Sigmoid colon (tissue), 7 donors: ENCODE measurements at regions of chr7 and their contacts with region 1.

Region 1: GRCh38 chr7:151304856-151305255 is 36.8 kb upstream of the NUB1 start:
- DNase-seq: no peak
- H3K4me3 ChIP-seq: no peak overlapping the region
- H3K27ac ChIP-seq: no peak overlapping the region
- H3K4me1 ChIP-seq: peaks cover 0 to 11% (median 9%) of the 10 kb centered on the region in 4 donors
- H3K27me3 ChIP-seq: peaks cover 5 to 49% (median 28%) of the 10 kb centered on the region in 3 donors
- CTCF ChIP-seq: no peak
- EP300 ChIP-seq: no peak
- POLR2A ChIP-seq: no peak

Region 2: DNA sequence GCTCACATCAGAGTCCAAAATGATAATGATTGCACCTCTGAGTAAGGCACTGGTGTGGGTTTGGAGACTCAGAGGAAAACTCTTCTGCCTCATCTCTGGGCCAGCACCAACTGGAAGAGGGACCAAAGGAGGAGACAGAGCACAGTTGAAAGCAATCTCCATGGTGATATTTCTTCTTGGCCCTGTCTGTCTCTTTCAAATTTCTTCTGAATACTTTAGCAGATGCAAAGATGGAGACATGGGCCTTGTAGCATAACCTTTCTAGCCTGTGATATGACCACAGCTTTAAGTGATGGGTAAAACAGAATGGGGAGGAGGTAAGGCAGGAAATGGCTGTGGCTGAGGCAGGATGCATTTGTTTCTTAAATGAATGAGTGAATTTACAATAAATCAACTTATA is 802.3 kb before region 1 on chr7:
- intact Hi-C with region 1: no loop called
- DNase-seq: no peak
- H3K4me3 ChIP-seq: no peak overlapping the region
- H3K27ac ChIP-seq: no peak overlapping the region
- H3K4me1 ChIP-seq: no peaks in the 10 kb centered on the region
- H3K27me3 ChIP-seq: no peaks in the 10 kb centered on the region
- CTCF ChIP-seq: no peak
- EP300 ChIP-seq: no peak
- POLR2A ChIP-seq: no peak

Region 3: GRCh38 chr7:151123822-151124464 is 180.9 kb before region 1 on chr7:
- intact Hi-C with region 1: loop called (anchors 2 kb)
- DNase-seq: peak; percentile 91
- H3K4me3 ChIP-seq: no peak overlapping the region
- H3K27ac ChIP-seq: no peak overlapping the region
- H3K4me1 ChIP-seq: peaks cover 0 to 26% (median 15%) of the 10 kb centered on the region in 4 donors
- H3K27me3 ChIP-seq: no peaks in the 10 kb centered on the region
- CTCF ChIP-seq: peak; percentile 93 to 98 (median 96)
- EP300 ChIP-seq: no peak
- POLR2A ChIP-seq: no peak

Region 4: GRCh38 chr7:151172273-151173141 is 132.3 kb before region 1 on chr7:
- intact Hi-C with region 1: loop called (anchors 5 kb)
- DNase-seq: peak; percentile 90
- H3K4me3 ChIP-seq: no peak overlapping the region
- H3K27ac ChIP-seq: no peak overlapping the region
- H3K4me1 ChIP-seq: peaks cover 0 to 13% (median 8%) of the 10 kb centered on the region in 4 donors
- H3K27me3 ChIP-seq: peaks cover 13 to 60% (median 42%) of the 10 kb centered on the region in 3 donors
- CTCF ChIP-seq: peak; percentile 100
- EP300 ChIP-seq: no peak
- POLR2A ChIP-seq: no peak

Region 5: DNA sequence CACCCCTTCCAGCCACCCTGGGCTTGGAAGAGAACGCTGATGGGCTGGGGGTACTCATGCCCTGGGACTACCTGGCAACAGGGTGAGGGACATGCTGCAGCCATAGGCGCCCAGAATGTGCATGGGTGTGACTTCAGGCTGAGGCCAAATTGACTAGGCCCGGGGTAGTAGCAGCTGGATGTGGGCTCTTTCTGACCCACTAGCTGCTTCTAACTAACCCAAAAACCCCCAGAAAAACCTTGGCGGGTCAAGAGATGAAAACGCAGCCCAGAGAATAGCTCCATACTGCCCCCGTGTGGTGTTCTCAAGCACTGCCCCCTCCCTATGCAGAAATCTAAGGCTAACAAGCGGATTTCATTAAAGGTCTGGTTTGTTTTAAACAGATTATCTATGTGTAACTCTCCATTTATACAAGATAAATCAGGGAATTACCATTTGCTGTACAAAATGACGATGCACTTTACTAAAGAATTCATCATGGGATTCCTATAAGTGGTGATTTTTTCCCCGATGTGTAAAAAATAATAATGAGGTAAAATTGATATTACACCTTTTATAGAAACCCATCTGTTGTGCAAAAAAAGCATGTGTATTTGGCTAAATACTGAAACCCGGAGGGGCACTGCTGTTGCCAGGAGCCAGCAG is 60.5 kb before region 1 on chr7:
- intact Hi-C with region 1: loop called (anchors 1 kb)
- DNase-seq: no peak
- H3K4me3 ChIP-seq: peak overlapping the region in 1 of 4 donors; percentile 52
- H3K27ac ChIP-seq: peak overlapping the region in 1 of 4 donors; percentile 94
- H3K4me1 ChIP-seq: peaks cover 0 to 61% (median 55%) of the 10 kb centered on the region in 4 donors
- H3K27me3 ChIP-seq: peaks cover 0 to 6% (median 2%) of the 10 kb centered on the region in 3 donors
- CTCF ChIP-seq: peak; percentile 56 to 91 (median 72)
- EP300 ChIP-seq: no peak
- POLR2A ChIP-seq: no peak

Region 6: DNA sequence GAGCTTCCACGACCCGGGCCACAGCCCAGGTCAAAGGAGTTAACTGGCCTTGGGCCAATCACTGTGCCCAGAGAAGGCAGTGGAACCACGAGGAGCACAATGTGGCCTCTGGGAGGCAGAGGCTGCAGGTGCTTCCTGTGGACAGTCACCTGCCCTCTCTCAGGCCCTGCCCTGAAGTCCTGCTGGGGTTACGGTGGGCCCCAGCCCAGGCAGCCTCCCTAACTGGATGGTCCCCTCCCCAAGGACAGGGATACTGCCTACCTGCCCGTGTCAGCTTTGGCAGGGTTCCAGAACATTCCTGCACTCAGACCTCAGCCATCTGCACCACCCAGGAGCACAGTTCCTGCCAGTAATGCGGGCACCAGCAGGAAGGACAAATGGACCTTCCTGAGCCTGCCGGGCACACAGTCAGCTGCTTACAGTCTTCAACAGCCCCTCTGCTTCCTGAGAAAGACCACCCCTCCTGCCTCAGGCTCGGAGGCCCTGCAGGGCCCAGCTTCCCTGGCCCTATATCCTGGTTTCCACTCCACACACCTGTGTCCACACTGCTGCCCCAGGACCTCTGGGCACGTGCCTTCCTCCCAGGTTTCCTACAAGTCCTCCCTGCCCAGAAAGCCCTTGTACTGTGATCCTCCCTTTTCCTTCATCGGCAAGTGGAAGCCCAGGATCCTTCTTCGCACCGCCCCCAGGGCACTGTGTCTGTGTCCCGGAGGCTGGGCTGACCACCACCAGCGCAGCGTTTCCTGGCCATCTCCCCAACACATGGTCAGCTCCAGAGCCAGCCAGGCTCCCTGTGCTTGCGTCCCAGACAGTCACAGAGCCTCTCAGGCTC is 81.7 kb after region 1 on chr7:
- intact Hi-C with region 1: no loop called
- DNase-seq: no peak
- H3K4me3 ChIP-seq: no peak overlapping the region
- H3K27ac ChIP-seq: no peak overlapping the region
- H3K4me1 ChIP-seq: peaks cover 0 to 12% (median 8%) of the 10 kb centered on the region in 4 donors
- H3K27me3 ChIP-seq: peaks cover 11 to 25% (median 13%) of the 10 kb centered on the region in 3 donors
- CTCF ChIP-seq: no peak
- EP300 ChIP-seq: no peak
- POLR2A ChIP-seq: no peak

Region 7: GRCh38 chr7:151631968-151632749 is 327.3 kb after region 1 on chr7:
- intact Hi-C with region 1: no loop called
- DNase-seq: peak; percentile 87
- H3K4me3 ChIP-seq: peak overlapping the region; percentile 52 to 86 (median 74)
- H3K27ac ChIP-seq: peak overlapping the region; percentile 94 to 97 (median 95)
- H3K4me1 ChIP-seq: peaks cover 0 to 48% (median 41%) of the 10 kb centered on the region in 4 donors
- H3K27me3 ChIP-seq: no peaks in the 10 kb centered on the region
- CTCF ChIP-seq: peak in 1 of 4 experiments; percentile 15
- EP300 ChIP-seq: no peak
- POLR2A ChIP-seq: no peak